WTC11 (cell line): ENCODE measurements at regions of chr3 and their contacts with region 1.

Region 1: DNA sequence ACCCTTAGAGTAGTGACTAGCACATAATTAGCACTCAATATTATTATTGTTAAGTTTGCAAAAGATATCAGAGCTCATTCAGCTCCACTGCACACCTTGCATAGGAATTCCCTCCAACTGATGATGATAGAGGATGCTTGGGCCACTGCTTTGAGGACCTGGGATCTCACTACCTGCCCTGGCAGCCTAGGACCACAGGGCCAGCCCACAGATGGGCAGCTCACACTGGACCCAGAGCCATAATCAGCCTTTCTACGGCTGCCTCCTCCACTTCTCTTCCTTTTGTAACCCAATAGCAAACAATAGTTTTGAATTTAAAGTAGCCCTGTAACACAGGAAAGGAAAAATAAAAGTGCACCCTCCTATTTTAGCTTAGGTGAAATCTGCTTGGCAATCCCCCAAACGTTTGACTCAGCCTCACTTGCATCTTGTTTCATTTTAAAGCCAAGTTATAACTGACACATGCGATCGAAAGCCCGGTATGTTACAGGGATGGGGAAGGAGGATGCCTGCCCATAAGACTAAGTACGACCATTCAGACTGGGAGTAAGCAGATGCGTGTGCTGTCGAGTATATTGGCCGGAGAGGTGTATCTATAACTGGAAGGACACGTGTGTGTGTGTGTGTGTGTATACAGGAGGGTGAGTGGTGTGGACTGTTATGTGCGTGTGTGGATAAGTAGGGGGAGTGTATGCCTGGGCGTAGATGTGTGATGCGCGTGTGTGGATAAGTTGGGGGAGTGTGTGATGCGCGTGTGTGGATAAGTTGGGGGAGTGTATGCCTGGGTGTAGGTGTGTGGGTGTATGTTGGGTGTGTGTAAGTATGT is 65.9 kb downstream of the CPN2 start:
- DNase-seq: peak; percentile 4
- ATAC-seq: no peak
- H3K4me3 Mint-ChIP-seq: no peak overlapping the region
- H3K27ac Mint-ChIP-seq: no peak overlapping the region
- H3K4me1 Mint-ChIP-seq: 0 out of 2 replicates have a peak, but pooled peaks cover 3% of the 10 kb centered on the region
- H3K27me3 Mint-ChIP-seq: peaks cover 7% of the 10 kb centered on the region
- CTCF ChIP-seq: no peak

Region 2: GRCh38 chr3:194089357-194090177 is 195.7 kb before region 1 on chr3:
- CTCF ChIA-PET with region 1: no interaction called
- POLR2A ChIA-PET with region 1: no interaction called
- DNase-seq: no peak
- ATAC-seq: peak; percentile 17
- H3K4me3 Mint-ChIP-seq: no peak overlapping the region
- H3K27ac Mint-ChIP-seq: no peak overlapping the region; the same call in 1 of the 2 replicates
- H3K4me1 Mint-ChIP-seq: peaks cover 32% of the 10 kb centered on the region
- H3K27me3 Mint-ChIP-seq: peaks cover 6% of the 10 kb centered on the region
- CTCF ChIP-seq: no peak

Region 3: DNA sequence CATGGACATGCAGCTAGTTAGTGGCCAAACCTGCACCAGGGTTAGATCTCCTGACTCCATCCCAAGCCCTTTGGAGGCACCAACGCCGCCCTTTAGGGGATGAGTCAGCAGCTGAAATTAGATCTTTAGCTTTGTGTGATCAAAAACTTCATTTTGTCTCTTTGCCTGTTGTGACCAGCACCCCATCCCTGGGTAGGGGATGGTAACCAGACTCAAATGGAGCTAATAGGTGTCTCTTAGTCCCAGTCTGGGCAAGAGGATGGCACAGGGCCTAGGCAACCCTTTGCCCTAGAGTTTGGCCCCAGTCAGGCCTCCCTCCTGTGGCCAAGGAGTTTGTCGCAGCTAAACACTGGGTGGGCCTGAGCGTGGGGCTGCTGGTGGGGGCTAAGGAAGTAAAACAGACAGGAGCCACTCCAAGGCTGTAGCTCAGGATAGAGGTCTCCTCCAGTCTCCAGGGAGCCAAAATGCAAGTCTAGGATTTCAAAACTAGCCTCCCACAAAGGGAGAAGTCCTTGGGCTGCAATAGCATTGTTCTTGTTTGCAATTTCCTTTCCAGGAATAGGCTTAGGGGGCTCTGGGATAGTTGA is 39.2 kb before region 1 on chr3:
- CTCF ChIA-PET with region 1: interaction called, 10 read pairs
- POLR2A ChIA-PET with region 1: no interaction called
- DNase-seq: peak; percentile 43
- ATAC-seq: peak; percentile 89
- H3K4me3 Mint-ChIP-seq: no peak overlapping the region
- H3K27ac Mint-ChIP-seq: 0 out of 2 replicates have a peak overlapping the region, but pooled peaks have one; percentile 15
- H3K4me1 Mint-ChIP-seq: peaks cover 32% of the 10 kb centered on the region
- H3K27me3 Mint-ChIP-seq: no peaks in the 10 kb centered on the region
- CTCF ChIP-seq: no peak

Region 4: GRCh38 chr3:194265483-194265892 is 19.7 kb before region 1 on chr3:
- CTCF ChIA-PET with region 1: interaction called, 30 read pairs
- POLR2A ChIA-PET with region 1: no interaction called
- DNase-seq: no peak
- ATAC-seq: no peak
- H3K4me3 Mint-ChIP-seq: no peak overlapping the region
- H3K27ac Mint-ChIP-seq: peak overlapping the region; percentile 45; the same call in 1 of the 2 replicates
- H3K4me1 Mint-ChIP-seq: peaks cover 30% of the 10 kb centered on the region
- H3K27me3 Mint-ChIP-seq: 0 out of 2 replicates have a peak, but pooled peaks cover 2% of the 10 kb centered on the region
- CTCF ChIP-seq: no peak

Region 5: GRCh38 chr3:194296454-194297263 is 11.4 kb after region 1 on chr3:
- CTCF ChIA-PET with region 1: interaction called, 43 read pairs
- POLR2A ChIA-PET with region 1: interaction called, 10 read pairs
- DNase-seq: peak; percentile 84
- ATAC-seq: peak; percentile 59
- H3K4me3 Mint-ChIP-seq: peak overlapping the region; percentile 51
- H3K27ac Mint-ChIP-seq: peak overlapping the region; percentile 84
- H3K4me1 Mint-ChIP-seq: peaks cover 49% of the 10 kb centered on the region
- H3K27me3 Mint-ChIP-seq: peaks cover 6% of the 10 kb centered on the region
- CTCF ChIP-seq: no peak